Activated CD4-positive, alpha-beta memory T cell treated with anti-CD3 and anti-CD28 coated beads, Interleukin-2, amount 10 ng/mL, durations not matched to agents 7 days and 5 days (primary cell): ENCODE measurements at regions of chr3 and their contacts with region 1.

Region 1: DNA sequence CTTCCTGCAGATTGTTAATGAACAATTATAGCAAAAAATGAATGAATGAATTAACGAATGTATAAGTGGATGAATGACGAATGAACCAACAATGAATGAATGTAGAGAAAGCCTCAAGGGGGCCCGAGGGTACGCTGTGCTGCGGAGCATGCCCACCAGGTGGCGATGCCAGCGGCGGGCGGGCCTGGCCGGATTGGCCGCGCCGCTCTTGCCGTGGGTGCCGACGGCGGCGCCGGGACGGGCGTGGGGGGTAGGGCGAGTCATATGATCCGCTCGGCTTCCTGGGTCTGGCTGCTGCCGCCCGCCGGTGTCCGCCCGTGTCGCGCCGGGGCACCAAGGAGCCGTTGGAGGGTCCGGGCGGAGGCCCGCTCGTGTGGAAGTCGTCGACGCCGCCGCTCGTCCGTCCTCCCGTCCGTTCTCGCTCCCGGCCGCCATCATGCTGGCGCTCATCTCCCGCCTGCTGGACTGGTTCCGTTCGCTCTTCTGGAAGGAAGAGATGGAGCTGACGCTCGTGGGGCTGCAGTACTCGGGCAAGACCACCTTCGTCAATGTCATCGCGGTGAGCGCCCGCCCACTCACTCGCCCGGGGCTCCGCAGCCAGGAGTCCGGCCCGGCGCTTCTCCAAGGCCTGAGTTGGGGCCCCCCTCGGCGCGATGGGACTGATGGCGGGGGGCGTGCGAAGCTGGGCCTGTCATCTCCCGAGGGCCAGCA is at the start of gene ARL8B:
- DNase-seq: peak; percentile 93
- H3K4me3 Mint-ChIP-seq: peak within 1 kb of the TSS; percentile 77
- H3K27ac Mint-ChIP-seq: peak within 1 kb of the TSS; percentile 83
- H3K4me1 Mint-ChIP-seq: peaks cover 31% of the 10 kb centered on the region
- H3K27me3 Mint-ChIP-seq: no peaks in the 10 kb centered on the region
- total RNA-seq, gene ARL8B: 38.2 to 45.7 TPM

Region 2: DNA sequence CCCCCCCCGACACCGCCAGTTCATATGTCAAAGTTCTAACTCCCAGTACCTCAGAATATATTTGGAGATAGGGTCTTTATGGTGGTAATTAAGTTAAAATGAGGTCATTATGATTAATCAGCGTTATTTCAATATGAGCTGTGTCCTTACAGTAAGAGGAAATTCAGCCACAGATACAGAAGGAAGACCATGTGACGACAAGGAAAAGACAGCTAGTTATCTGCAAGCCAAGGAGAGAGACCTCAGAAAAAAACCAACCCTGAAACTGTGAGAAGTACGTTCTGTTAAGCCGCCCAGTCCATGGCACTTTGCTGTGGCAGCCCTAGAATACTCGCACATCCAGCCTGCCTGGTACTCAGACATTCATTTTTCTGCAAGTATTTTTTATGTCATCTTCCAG is 62.4 kb before region 1 on chr3:
- CTCF ChIA-PET with region 1: no interaction called
- POLR2A ChIA-PET with region 1: no interaction called
- DNase-seq: no peak
- H3K4me3 Mint-ChIP-seq: no peak overlapping the region
- H3K27ac Mint-ChIP-seq: no peak overlapping the region
- H3K4me1 Mint-ChIP-seq: peaks cover 40% of the 10 kb centered on the region
- H3K27me3 Mint-ChIP-seq: peaks cover 10% of the 10 kb centered on the region

Region 3: DNA sequence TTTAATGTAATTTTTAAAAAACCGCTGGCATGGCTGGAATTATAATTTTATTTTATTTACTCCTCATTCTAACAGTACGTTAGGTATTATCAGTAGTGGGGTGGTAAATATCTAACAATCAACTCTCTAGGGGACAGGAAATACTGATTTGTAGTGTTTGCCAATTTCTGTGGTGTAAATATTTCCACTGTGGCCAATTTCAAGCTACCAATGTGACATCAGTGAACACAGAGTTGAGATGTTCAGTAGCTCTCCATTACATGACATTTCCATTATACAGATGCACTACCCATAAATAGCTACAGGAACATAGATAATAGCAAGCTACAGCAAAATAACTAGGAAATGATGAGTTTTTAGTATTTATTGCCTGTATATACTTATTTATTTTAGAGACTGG is 10.1 kb before region 1 on chr3:
- CTCF ChIA-PET with region 1: no interaction called
- POLR2A ChIA-PET with region 1: no interaction called
- DNase-seq: no peak
- H3K4me3 Mint-ChIP-seq: no peak overlapping the region
- H3K27ac Mint-ChIP-seq: no peak overlapping the region
- H3K4me1 Mint-ChIP-seq: no peaks in the 10 kb centered on the region
- H3K27me3 Mint-ChIP-seq: peaks cover 4% of the 10 kb centered on the region

Region 4: DNA sequence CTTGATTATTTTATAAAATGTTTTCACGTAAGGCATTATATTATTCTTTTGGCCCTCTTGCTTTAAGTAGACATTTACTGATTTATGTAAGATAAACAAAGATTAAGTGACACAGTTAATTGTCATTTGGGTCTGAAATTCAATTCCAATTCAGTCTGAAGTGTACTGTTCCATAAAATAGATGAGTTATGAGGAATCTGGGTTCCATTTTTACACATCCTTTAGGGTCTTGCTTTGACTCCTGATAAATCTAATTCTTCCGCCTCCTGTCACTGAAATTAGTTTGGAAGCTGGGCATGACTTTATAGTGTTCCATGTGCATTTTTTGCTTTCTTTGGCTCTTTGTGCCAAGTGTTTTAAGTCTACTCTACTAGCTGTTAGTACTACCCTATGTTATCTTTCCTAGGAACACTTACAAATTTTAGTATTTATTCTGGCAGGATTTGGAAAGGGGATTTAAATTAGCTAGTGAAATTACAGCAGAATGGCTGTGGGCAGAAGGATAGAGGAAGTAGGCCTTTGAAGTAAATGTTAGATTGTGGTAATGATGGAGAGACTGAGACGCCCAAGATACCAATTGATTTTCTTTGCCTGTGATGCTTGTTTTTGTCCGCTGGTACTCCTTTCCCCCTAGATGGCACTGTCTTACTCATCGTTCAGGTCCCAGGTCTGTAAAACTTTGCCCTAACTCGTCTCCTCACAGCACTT is 14.2 kb after region 1 on chr3:
- CTCF ChIA-PET with region 1: interaction called, 14 read pairs
- POLR2A ChIA-PET with region 1: interaction called, 3 read pairs
- DNase-seq: peak; percentile 29
- H3K4me3 Mint-ChIP-seq: no peak overlapping the region
- H3K27ac Mint-ChIP-seq: peak overlapping the region; percentile 0
- H3K4me1 Mint-ChIP-seq: peaks cover 38% of the 10 kb centered on the region
- H3K27me3 Mint-ChIP-seq: no peaks in the 10 kb centered on the region

Region 5: GRCh38 chr3:5187156-5187919 is 65.2 kb after region 1 on chr3 and contains the start of gene EDEM1:
- CTCF ChIA-PET with region 1: interaction called, 33 read pairs
- POLR2A ChIA-PET with region 1: interaction called, 56 read pairs
- DNase-seq: peak; percentile 97
- H3K4me3 Mint-ChIP-seq: peak within 1 kb of the TSS; percentile 98
- H3K27ac Mint-ChIP-seq: peak within 1 kb of the TSS; percentile 96
- H3K4me1 Mint-ChIP-seq: peaks cover 32% of the 10 kb centered on the region
- H3K27me3 Mint-ChIP-seq: no peaks in the 10 kb centered on the region
- total RNA-seq, gene EDEM1: 148 to 150 TPM

Region 6: DNA sequence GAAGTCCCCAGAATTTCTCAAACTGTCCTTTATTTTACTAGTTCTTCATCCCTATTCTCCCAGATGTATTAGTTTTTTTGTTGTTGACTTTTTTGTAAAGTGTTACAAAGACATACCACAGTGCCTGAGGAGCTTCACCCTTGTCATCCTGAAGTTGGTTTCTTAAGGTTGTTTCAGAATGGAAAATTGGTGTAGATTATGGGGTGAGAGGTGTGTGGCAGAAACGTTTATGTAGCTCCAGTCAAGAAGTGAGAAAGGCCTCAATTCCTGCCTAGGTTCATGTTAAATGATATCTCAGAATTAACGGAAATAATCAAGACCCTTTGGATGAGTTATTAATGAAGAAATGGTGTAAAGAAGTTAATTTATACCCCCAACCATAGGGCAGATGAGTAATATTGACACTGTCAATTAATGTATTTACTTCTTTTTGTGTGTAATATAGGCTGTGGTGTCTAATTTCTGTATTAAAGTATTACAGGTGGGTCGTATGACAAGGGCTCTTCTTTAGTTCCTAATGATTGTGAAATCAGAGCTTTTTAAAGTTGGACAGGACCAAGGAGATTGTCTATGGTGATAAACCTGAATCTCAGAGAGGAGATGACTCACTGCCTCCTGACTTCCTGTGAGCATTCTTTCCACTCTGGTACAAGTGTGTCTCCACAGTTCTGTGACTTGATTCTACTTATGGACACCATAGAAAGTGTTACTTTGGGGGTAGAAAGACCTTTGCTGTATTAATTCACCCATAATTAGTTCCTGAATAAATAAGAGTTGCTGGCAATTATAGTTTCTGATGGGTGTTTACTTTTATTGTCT is 72.4 kb after region 1 on chr3:
- CTCF ChIA-PET with region 1: interaction called, 33 read pairs
- POLR2A ChIA-PET with region 1: interaction called, 56 read pairs
- DNase-seq: peak; percentile 61
- H3K4me3 Mint-ChIP-seq: peak overlapping the region; percentile 2
- H3K27ac Mint-ChIP-seq: peak overlapping the region; percentile 96
- H3K4me1 Mint-ChIP-seq: peaks cover 84% of the 10 kb centered on the region
- H3K27me3 Mint-ChIP-seq: no peaks in the 10 kb centered on the region